Mammary epithelial cell (primary cell): ENCODE measurements at regions of chr1 and their contacts with region 1.

Region 1: DNA sequence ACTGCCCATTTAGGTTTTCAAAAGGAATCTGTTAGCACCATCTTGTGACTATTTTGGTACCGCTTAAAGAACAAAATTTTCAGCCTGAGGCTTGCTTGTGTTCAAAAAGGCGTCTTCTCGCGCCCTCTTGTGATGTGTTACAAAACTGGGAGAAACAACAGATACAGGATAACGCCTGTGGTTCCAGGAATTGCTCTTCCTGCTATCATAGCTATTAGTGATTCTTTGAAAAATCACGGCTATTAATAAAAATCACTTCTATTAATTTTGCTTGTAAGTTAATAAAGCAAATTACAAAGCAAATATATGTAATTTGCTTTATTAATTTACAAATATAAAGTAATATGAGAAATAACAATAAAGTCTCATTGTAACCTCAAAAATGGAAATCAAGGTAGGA is 82.2 kb upstream of the ABCD3 start:
- DNase-seq: peak; percentile 80
- H3K4me3 ChIP-seq: no peak overlapping the region
- H3K27ac ChIP-seq: no peak overlapping the region
- H3K4me1 ChIP-seq: peaks cover 20% of the 10 kb centered on the region
- H3K27me3 ChIP-seq: no peaks in the 10 kb centered on the region
- CTCF ChIP-seq: peak; percentile 86 to 91

Region 2: DNA sequence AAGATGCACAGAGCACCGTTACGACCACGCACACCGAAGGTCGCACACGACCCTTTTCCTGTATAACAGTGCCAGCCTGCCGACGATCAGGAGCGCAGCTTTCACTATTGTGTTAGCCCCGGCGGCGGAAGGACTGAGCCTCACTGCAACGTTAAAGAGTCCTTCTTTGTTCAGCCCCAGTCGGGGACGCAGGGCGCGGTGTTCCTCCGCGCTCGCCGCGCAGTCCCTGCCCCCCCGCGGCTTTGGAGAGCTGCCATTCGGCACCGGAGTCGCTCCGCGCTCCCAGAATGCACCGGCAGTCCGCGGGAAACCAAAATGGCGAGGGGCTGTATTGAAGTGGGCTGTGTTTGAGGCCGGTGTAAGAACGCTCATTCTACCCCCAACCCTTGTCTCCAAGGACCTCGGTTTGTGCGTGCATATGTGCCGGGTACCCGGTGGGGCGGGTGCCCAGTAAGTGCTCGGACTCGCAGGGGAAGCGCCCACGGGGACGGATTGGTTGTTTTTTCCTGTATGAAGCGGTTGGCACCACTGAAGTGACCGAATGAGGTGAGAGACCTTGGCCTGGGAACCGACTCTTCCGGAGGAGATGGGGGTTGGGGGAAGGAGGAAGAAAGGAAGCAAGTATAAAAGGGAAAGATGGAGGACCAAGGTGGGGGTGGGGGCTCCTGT is 1256.8 kb before region 1 on chr1 and contains the start of gene MTF2:
- CTCF ChIA-PET with region 1: no interaction called
- dilution Hi-C with region 1: no loop called
- in situ Hi-C with region 1: no loop called
- intact Hi-C with region 1: loop called (anchors 5 kb)
- DNase-seq: peak; percentile 94
- H3K4me3 ChIP-seq: peak within 1 kb of the TSS; percentile 67 to 99 (median 83)
- H3K27ac ChIP-seq: peak within 1 kb of the TSS; percentile 79
- H3K4me1 ChIP-seq: peaks cover 22% of the 10 kb centered on the region
- H3K27me3 ChIP-seq: no peaks in the 10 kb centered on the region
- CTCF ChIP-seq: no peak
- total RNA-seq, gene MTF2: 23.5 to 27.5 TPM

Region 3: GRCh38 chr1:93878889-93879586 is 456.9 kb before region 1 on chr1 and contains the start of gene DNTTIP2:
- CTCF ChIA-PET with region 1: no interaction called
- dilution Hi-C with region 1: no loop called
- in situ Hi-C with region 1: no loop called
- intact Hi-C with region 1: loop called (anchors 10 kb)
- DNase-seq: peak; percentile 90
- H3K4me3 ChIP-seq: peak within 1 kb of the TSS; percentile 77 to 86 (median 80)
- H3K27ac ChIP-seq: peak within 1 kb of the TSS; percentile 92
- H3K4me1 ChIP-seq: peaks cover 28% of the 10 kb centered on the region
- H3K27me3 ChIP-seq: no peaks in the 10 kb centered on the region
- CTCF ChIP-seq: no peak
- total RNA-seq, gene DNTTIP2: 40.5 to 74.9 TPM

Region 4: GRCh38 chr1:93919780-93920179 is 416.2 kb before region 1 on chr1:
- CTCF ChIA-PET with region 1: interaction called, 12 read pairs
- dilution Hi-C with region 1: no loop called
- in situ Hi-C with region 1: no loop called
- intact Hi-C with region 1: no loop called
- DNase-seq: no peak
- H3K4me3 ChIP-seq: no peak overlapping the region
- H3K27ac ChIP-seq: no peak overlapping the region
- H3K4me1 ChIP-seq: no peaks in the 10 kb centered on the region
- H3K27me3 ChIP-seq: no peaks in the 10 kb centered on the region
- CTCF ChIP-seq: no peak

Region 5: GRCh38 chr1:94045465-94046056 is 290.4 kb before region 1 on chr1:
- CTCF ChIA-PET with region 1: interaction called, 9 read pairs
- dilution Hi-C with region 1: no loop called
- in situ Hi-C with region 1: loop called in 1 of 2 experiments (anchors 5 kb)
- intact Hi-C with region 1: loop called (anchors 1 kb)
- DNase-seq: peak; percentile 91
- H3K4me3 ChIP-seq: no peak overlapping the region
- H3K27ac ChIP-seq: no peak overlapping the region
- H3K4me1 ChIP-seq: peaks cover 16% of the 10 kb centered on the region
- H3K27me3 ChIP-seq: no peaks in the 10 kb centered on the region
- CTCF ChIP-seq: peak; percentile 81

Region 6: DNA sequence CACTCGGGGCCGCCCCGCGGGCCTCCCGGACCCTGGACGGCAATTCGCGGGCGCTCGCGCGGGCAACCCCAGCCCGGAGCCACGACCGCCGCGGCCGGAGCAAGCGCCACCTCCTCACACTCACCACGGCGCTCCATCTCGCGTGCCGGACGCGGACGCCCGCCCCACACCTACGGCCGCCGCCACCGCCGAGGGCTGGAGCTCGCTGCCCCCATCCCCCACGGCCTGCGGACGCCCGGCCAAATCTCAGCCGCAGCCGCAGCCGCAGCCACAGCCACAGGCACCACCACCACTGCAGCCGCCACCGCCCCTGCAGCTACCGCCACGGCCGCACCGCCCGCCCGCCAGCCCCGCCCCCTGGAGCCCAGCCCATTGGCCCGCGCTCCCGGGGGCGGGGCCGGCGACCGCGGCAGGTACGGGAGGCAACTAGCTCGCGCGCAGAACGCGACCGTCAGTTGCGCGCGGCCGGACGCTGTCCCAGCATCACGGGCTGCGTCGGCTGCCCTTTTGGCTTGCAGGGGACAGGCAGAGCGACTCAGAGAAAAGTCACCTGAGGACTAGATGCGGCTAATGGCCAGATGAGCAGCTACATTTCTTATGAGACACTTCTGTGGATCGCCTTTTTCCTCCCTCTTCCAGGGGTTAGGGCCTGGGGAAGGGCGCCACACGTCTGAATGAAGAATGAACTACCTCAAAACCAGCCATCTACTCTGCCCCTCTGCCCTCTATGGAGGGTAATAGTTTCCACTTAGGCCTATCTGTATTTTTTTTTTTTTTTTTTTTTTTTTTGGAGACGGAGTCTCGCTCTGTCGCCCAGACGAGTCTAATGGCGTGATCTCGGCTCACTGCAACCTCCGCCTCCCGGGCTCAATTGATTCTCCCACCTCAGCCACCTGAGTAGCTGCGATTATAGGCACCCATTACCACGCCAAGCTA is 98.4 kb before region 1 on chr1 and contains the start of gene ARHGAP29:
- CTCF ChIA-PET with region 1: interaction called, 28 read pairs
- dilution Hi-C with region 1: no loop called
- in situ Hi-C with region 1: no loop called
- intact Hi-C with region 1: loop called (anchors 1 kb)
- DNase-seq: peak; percentile 83
- H3K4me3 ChIP-seq: peak within 1 kb of the TSS; percentile 80 to 99 (median 96)
- H3K27ac ChIP-seq: peak within 1 kb of the TSS; percentile 82
- H3K4me1 ChIP-seq: peaks cover 34% of the 10 kb centered on the region
- H3K27me3 ChIP-seq: no peaks in the 10 kb centered on the region
- CTCF ChIP-seq: no peak
- total RNA-seq, gene ARHGAP29: 54.7 to 100 TPM

Region 7: DNA sequence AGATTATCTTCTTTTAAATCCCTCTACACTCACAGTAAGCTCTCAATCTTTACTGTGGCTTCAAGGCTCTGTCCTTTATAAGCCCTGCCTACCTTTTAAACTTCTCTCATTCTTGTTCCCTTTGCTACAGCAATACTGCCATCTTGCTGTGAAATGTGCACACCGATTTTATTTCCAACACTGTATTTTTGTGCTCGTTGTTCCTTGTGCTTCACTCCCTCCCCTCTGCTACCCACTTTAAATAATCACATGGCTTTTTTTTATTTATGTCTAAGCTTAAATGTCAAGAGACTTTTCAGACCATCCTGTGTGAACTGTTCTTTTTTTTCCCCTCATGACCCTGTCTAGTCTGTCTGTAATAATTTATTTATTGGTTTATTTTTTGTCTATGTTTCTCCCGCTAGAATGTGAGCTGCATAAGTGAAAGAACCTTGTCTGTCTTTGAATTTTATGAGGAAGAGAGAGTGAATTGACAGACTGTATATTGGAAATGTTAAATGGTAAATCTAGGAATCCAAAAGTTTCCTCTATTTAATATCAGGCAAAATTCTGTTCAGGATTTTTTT is 127.9 kb after region 1 on chr1:
- CTCF ChIA-PET with region 1: interaction called, 6 read pairs
- dilution Hi-C with region 1: no loop called
- in situ Hi-C with region 1: no loop called
- intact Hi-C with region 1: loop called (anchors 1 kb)
- DNase-seq: peak; percentile 55
- H3K4me3 ChIP-seq: no peak overlapping the region
- H3K27ac ChIP-seq: no peak overlapping the region
- H3K4me1 ChIP-seq: no peaks in the 10 kb centered on the region
- H3K27me3 ChIP-seq: no peaks in the 10 kb centered on the region
- CTCF ChIP-seq: peak; percentile 43 to 58

Region 8: DNA sequence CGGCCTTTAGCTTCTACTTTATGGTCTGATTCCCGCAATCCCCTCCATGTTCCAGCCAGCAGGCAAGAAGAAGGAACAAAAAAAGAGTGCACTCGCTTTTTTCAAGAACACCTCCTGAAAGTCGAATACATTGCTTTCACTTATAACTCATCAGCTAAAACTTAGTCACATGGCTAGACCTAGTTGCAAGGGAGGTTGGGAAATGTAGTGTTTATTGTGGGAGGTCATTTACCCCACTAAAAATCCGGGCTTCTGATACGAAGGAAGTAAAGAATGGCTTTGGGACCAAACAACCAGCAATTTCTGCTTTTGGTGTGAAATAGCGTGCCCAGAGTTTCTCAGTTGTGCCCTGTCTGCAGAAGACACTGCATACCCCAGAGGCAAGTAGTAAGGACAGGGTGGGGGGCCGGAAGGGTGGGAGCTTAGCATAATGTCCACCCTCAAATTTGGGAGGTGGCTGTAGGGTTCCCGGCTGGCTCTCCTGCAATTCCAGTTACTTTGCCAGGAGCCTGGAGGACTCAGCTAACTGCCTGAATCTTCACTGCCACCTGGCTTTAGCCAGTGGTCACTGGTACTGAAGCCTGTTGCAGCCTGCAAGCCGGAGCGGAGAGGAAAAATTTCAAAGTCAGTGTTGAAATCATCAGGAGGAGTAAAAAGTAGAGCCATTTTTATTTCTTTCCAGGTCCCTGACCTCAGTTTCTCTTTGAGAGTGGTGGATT is 263.3 kb after region 1 on chr1:
- CTCF ChIA-PET with region 1: no interaction called
- dilution Hi-C with region 1: no loop called
- in situ Hi-C with region 1: no loop called
- intact Hi-C with region 1: no loop called
- DNase-seq: peak; percentile 57
- H3K4me3 ChIP-seq: no peak overlapping the region
- H3K27ac ChIP-seq: no peak overlapping the region
- H3K4me1 ChIP-seq: peaks cover 30% of the 10 kb centered on the region
- H3K27me3 ChIP-seq: no peaks in the 10 kb centered on the region
- CTCF ChIP-seq: peak; percentile 62 to 85